PC-3 (cell line): ENCODE measurements at regions of chr11 and their contacts with region 1.

Region 1: GRCh38 chr11:10096987-10097386 is 197.0 kb downstream of the SBF2 start:
- DNase-seq: no peak
- ATAC-seq: no peak
- H3K4me3 ChIP-seq: no peak overlapping the region
- H3K27ac ChIP-seq: no peak overlapping the region
- H3K4me1 ChIP-seq: peaks cover 19% of the 10 kb centered on the region
- H3K27me3 ChIP-seq: no peaks in the 10 kb centered on the region
- CTCF ChIP-seq: no peak

Region 2: DNA sequence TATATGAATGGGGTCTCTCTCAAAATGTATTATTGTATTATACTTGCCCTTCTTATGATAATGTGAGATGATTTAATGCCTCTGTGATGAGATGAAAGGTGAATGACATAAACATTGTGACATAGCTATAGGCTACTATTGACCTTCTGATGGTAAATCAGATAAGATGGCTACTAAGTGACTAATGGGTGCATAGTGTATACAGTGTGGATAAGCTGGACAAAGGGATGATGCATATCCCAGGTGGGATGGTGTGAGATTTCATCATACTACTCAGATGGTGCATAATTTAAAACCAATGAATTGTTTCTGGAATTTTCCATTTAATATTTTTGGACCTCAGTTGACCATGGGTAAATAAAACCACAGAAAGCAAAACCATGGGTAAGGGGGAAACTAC is 46.4 kb before region 1 on chr11:
- CTCF ChIA-PET with region 1: no interaction called
- POLR2A ChIA-PET with region 1: no interaction called
- intact Hi-C with region 1: loop called (anchors 5 kb)
- DNase-seq: peak; percentile 85
- ATAC-seq: peak; percentile 95
- H3K4me3 ChIP-seq: no peak overlapping the region
- H3K27ac ChIP-seq: peak overlapping the region; percentile 49
- H3K4me1 ChIP-seq: peaks cover 22% of the 10 kb centered on the region
- H3K27me3 ChIP-seq: no peaks in the 10 kb centered on the region
- CTCF ChIP-seq: no peak

Region 3: DNA sequence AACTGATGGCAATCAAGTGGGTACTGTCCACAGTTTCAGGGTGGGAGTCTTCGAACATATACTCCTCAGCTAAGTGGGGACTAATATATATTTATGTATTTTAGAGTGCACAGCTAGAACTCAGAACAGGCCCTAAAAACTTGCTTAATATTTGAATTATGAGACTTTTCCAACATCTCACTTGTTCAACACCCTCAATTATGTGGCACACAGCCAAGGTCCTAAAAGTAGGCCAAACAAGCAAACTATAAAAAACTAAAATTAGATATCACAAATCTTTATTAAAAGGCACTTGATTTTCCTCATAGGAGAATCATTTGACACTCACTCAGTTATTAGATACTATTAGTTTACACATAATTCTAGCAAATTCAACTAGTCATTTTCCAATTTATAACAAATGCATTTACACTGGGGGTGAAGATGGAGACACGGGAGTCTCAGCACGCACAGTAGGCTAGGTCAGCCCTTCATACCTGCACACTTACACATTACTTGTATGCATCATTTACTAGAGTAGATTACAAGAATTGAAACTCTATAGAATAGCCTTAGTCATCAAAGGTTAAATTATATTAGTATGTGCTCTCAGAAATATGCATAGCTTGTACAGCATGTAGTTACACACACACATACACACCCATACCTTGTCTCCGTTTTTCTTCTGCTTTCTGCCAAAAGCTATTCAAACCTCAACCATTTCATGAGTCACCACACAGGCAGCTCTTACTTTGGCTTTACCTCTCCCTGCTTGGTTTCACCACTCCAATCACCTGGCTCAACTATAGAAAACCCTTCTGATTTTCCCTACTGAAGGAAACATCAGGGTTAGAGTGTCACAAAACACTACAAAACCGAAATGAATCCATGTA is 25.6 kb after region 1 on chr11:
- CTCF ChIA-PET with region 1: no interaction called
- POLR2A ChIA-PET with region 1: no interaction called
- intact Hi-C with region 1: loop called (anchors 2 kb)
- DNase-seq: peak; percentile 94
- ATAC-seq: peak; percentile 94
- H3K4me3 ChIP-seq: peak overlapping the region; percentile 47; the same call in 1 of the 2 replicates
- H3K27ac ChIP-seq: peak overlapping the region; percentile 74
- H3K4me1 ChIP-seq: peaks cover 31% of the 10 kb centered on the region
- H3K27me3 ChIP-seq: no peaks in the 10 kb centered on the region
- CTCF ChIP-seq: no peak

Region 4: DNA sequence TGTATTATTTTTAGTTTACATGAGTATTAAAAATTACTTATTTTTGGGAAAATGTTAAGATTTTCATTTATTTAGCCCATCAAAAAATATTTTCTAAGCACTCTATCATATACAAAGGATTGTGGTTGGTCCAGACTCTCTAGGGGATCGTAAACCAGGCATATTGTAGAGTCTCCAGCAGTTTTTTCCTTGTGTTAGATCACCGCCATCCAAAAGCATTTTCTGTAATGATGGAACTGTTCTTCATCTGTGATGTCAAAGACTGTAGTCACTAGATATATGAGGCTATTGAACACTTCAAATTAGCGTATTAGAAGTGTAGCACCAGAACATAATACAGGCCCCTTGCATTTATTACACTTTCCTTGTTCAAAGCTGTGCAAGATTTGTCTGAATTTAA is 42.2 kb after region 1 on chr11:
- CTCF ChIA-PET with region 1: no interaction called
- POLR2A ChIA-PET with region 1: no interaction called
- intact Hi-C with region 1: no loop called
- DNase-seq: no peak
- ATAC-seq: no peak
- H3K4me3 ChIP-seq: no peak overlapping the region
- H3K27ac ChIP-seq: no peak overlapping the region
- H3K4me1 ChIP-seq: peaks cover 16% of the 10 kb centered on the region
- H3K27me3 ChIP-seq: no peaks in the 10 kb centered on the region
- CTCF ChIP-seq: no peak